OCI-LY7 (cell line): ENCODE measurements at regions of chr2 and their contacts with region 1.

Region 1: GRCh38 chr2:230472621-230473018 is 56.6 kb downstream of the SP100 start:
- DNase-seq: peak; percentile 32
- H3K4me3 ChIP-seq: no peak overlapping the region
- H3K27ac ChIP-seq: peak overlapping the region; percentile 88
- H3K4me1 ChIP-seq: peaks cover 42% of the 10 kb centered on the region
- CTCF ChIP-seq: no peak

Region 2: GRCh38 chr2:230219419-230220331 is 252.9 kb before region 1 on chr2 and contains the start of gene SP110:
- CTCF ChIA-PET with region 1: no interaction called
- POLR2A ChIA-PET with region 1: interaction called, 10 read pairs
- intact Hi-C with region 1: no loop called
- DNase-seq: peak; percentile 85
- H3K4me3 ChIP-seq: peak within 1 kb of the TSS; percentile 74
- H3K27ac ChIP-seq: peak within 1 kb of the TSS; percentile 36
- H3K4me1 ChIP-seq: peaks cover 60% of the 10 kb centered on the region
- CTCF ChIP-seq: no peak
- total RNA-seq, gene SP110: 15.7 and 15.8 TPM in 2 replicates

Region 3: DNA sequence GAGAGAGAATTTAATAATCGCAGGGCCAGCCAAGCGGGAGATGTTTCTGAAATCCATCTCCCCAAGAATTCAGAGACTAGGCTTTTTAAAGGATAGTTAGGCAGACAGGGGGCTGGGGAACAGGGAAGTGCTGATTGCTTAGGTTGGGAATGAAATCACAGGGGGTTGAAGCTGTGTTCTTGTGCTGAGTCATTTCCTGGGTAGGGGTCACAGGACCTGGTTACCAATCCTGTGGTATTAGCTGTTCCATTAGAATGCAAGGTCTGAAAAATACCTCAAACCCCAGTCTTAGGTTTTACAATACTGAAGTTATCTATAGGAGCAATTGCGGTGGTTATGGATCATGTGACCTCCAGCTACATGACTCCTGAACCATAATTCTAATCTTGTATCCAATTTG is 242.5 kb before region 1 on chr2:
- CTCF ChIA-PET with region 1: no interaction called
- POLR2A ChIA-PET with region 1: no interaction called
- intact Hi-C with region 1: no loop called
- DNase-seq: no peak
- H3K4me3 ChIP-seq: no peak overlapping the region
- H3K27ac ChIP-seq: no peak overlapping the region
- H3K4me1 ChIP-seq: peaks cover 26% of the 10 kb centered on the region
- CTCF ChIP-seq: no peak

Region 4: GRCh38 chr2:230326453-230327417 is 145.9 kb before region 1 on chr2 and contains the start of gene SP140L:
- CTCF ChIA-PET with region 1: no interaction called
- POLR2A ChIA-PET with region 1: no interaction called
- intact Hi-C with region 1: loop called (anchors 5 kb)
- DNase-seq: peak; percentile 84
- H3K4me3 ChIP-seq: peak within 1 kb of the TSS; percentile 69
- H3K27ac ChIP-seq: peak within 1 kb of the TSS; percentile 75
- H3K4me1 ChIP-seq: peaks cover 29% of the 10 kb centered on the region
- CTCF ChIP-seq: no peak
- total RNA-seq, gene SP140L: 7.5 and 10.4 TPM in 2 replicates

Region 5: DNA sequence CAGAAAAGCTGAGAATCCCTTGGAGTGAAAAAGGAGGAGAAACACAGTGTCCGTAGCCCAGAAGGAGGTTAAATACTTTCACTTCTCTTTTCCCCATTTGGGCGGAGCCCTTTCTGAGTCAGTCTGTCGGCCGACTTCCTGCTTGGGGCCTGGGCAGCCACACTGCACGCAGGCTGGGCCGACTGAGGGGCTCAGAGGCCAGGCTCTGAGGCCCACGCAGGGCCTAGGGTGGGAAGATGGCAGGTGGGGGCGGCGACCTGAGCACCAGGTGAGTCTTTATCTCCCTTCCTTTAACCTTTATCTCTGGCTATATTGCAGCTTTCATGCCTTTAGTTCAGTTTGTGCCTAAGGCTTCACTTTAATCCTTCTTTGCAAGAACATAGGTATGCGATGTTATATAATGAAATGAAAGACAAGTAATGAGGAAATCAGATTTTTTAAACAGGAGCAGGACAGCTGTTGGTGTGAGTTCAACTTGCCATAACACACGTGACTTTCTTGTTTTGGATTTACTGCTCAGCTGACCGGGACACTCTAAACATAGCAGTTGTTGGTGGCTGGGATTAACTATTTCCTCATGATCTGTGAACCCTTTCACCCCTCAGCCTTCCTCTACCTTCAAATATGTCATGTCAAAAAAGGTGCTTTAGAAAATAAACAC is 56.4 kb before region 1 on chr2 and contains the start of gene SP100:
- CTCF ChIA-PET with region 1: no interaction called
- POLR2A ChIA-PET with region 1: interaction called, 16 read pairs
- intact Hi-C with region 1: loop called (anchors 1 kb)
- DNase-seq: peak; percentile 91
- H3K4me3 ChIP-seq: peak within 1 kb of the TSS; percentile 72
- H3K27ac ChIP-seq: peak within 1 kb of the TSS; percentile 91
- H3K4me1 ChIP-seq: peaks cover 44% of the 10 kb centered on the region
- CTCF ChIP-seq: no peak
- total RNA-seq, gene SP100: 44.6 and 60.5 TPM in 2 replicates

Region 6: GRCh38 chr2:230430957-230431910 is 41.4 kb before region 1 on chr2:
- CTCF ChIA-PET with region 1: no interaction called
- POLR2A ChIA-PET with region 1: no interaction called
- intact Hi-C with region 1: no loop called
- DNase-seq: no peak
- H3K4me3 ChIP-seq: no peak overlapping the region
- H3K27ac ChIP-seq: no peak overlapping the region
- H3K4me1 ChIP-seq: peaks cover 9% of the 10 kb centered on the region
- CTCF ChIP-seq: no peak

Region 7: GRCh38 chr2:230447455-230448451 is 24.9 kb before region 1 on chr2:
- CTCF ChIA-PET with region 1: no interaction called
- POLR2A ChIA-PET with region 1: interaction called, 5 read pairs
- intact Hi-C with region 1: loop called (anchors 2 kb)
- DNase-seq: peak; percentile 81
- H3K4me3 ChIP-seq: peak overlapping the region; percentile 41
- H3K27ac ChIP-seq: peak overlapping the region; percentile 72
- H3K4me1 ChIP-seq: peaks cover 35% of the 10 kb centered on the region
- CTCF ChIP-seq: no peak

Region 8: DNA sequence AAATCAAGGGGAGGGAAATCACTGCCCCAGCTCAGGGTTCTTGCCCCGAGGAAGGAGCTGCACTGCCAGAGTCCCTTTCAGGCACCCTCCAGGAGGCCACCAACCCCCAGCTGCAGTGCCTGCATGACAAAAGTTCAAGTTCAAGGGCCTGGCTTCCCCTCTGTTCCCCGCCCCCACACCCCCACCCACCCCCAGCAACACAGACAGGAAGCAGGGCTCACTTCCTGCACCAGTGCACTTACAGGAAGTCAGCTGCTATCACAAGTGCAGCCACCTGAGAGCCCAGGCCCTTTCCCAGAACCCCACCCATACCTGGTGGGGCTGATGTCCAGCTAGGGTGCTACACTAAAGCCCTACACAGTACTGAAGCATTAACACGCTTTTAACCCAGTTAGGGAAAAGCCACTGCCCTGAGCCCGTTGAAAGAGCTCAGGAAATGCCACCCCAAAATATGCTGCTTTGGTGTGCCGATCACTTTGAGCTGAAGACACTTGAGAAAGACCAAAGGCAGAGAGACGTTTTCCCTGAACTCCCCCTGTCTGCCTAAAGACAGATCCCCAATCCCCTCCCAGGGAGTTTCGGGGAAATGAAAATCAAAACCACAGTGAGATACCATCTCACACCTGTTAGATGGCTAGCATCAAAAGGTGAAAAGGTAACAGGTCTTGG is 130.1 kb after region 1 on chr2:
- CTCF ChIA-PET with region 1: no interaction called
- POLR2A ChIA-PET with region 1: interaction called, 3 read pairs
- intact Hi-C with region 1: loop called (anchors 2 kb)
- DNase-seq: peak; percentile 94
- H3K4me3 ChIP-seq: peak overlapping the region; percentile 48
- H3K27ac ChIP-seq: peak overlapping the region; percentile 79
- H3K4me1 ChIP-seq: peaks cover 66% of the 10 kb centered on the region
- CTCF ChIP-seq: no peak